ENCODE measurements at regions of chr9 and their contacts with region 1.

Region 1: DNA sequence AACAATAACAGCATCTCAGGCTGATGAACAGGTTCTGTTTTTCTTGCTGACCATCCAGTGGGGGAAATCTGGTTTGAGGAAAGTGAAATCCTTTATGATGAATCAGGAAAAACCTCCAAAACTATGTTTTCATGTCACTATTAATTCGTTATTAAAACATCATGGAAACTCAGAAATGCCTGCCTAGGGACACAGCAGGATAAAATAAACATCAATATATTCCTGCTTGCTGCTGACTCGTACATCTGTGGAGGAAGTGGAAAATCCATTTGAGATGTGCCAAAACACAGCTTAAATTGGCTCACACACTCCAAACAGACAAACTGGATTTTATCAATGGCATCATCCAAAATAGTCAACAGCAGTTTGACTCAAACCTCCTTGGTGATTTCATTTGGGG is 53.0 kb downstream of the TEK start:
- DNase-seq: no peak
- H3K4me3 ChIP-seq: no peak overlapping the region
- H3K27ac ChIP-seq: no peak overlapping the region
- H3K4me1 ChIP-seq: no peaks in the 10 kb centered on the region
- H3K27me3 ChIP-seq: no peaks in the 10 kb centered on the region
- CTCF ChIP-seq: no peak
- EP300 ChIP-seq: no peak
- POLR2A ChIP-seq: no peak
- RAD21 ChIP-seq: no peak

Region 2: GRCh38 chr9:27179245-27179865 is 17.3 kb after region 1 on chr9:
- CTCF ChIA-PET with region 1: interaction called, 33 read pairs
- POLR2A ChIA-PET with region 1: no interaction called
- DNase-seq: no peak
- H3K4me3 ChIP-seq: no peak overlapping the region
- H3K27ac ChIP-seq: no peak overlapping the region
- H3K4me1 ChIP-seq: no peaks in the 10 kb centered on the region
- H3K27me3 ChIP-seq: no peaks in the 10 kb centered on the region
- CTCF ChIP-seq: no peak
- EP300 ChIP-seq: no peak
- POLR2A ChIP-seq: no peak
- RAD21 ChIP-seq: no peak

Measured in H1 (cell line).